Ascending aorta (tissue), 2 donors: ENCODE measurements at regions of chr17 and their contacts with region 1.

Region 1: DNA sequence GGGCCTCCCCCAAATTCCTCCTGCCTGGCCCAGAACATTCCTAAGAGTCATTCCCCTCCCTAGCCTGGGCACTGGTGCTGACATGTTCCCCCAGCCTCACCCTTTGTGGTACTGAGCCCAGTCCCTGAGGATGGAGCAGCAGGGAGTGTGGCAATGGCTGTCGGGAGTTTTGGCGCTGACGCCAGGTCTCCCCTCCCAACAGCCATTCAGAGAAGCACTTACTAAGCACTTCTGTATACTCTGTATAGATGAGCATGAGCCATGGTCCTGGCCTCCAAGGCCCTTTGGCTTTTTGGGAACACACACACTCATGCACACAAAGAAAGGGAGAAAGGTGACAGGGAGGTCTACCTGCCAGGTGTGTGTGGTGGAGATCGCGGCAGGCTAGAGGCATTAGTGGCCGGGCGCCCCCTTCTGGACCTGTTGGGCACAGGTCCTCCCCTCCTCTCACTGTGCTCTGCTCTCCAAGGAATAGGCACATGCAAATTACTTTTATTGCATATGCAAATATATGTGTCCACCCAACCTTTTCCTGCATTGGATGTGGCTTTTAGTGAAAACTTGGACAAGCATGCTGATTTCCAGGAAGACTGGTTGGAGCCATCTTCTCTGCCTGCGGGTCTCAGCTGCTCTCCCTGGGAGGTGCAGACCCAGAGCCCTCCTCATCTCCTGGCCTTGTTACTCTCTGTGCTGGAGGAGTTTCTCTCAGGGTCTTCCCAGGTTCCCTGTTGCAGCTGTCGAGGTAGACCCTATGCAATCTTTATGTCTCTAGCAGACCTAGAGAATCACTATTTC is 17.4 kb upstream of the C17orf107 start:
- DNase-seq: no peak
- H3K4me3 ChIP-seq: no peak overlapping the region
- H3K27ac ChIP-seq: no peak overlapping the region
- H3K4me1 ChIP-seq: no peaks in the 10 kb centered on the region
- H3K27me3 ChIP-seq: no peaks in the 10 kb centered on the region
- CTCF ChIP-seq: peak; percentile 48 to 71 (median 54)

Region 2: GRCh38 chr17:4833178-4833940 is 48.6 kb before region 1 on chr17 and contains the start of gene MINK1:
- intact Hi-C with region 1: loop called (anchors 5 kb)
- DNase-seq: peak; percentile 59 to 93
- H3K4me3 ChIP-seq: peak within 1 kb of the TSS; percentile 75 to 82
- H3K27ac ChIP-seq: peak within 1 kb of the TSS; percentile 84 to 87
- H3K4me1 ChIP-seq: peaks cover 0 to 9% of the 10 kb centered on the region in 2 donors
- H3K27me3 ChIP-seq: no peaks in the 10 kb centered on the region
- CTCF ChIP-seq: no peak
- total RNA-seq, gene MINK1: 45.6 TPM